ENCODE measurements at regions of chr5 and their contacts with region 1.

Region 1: GRCh38 chr5:170267431-170268152 is 30.0 kb downstream of the LCP2 start:
- DNase-seq: peak; percentile 72 to 87 (median 78)
- H3K4me3 ChIP-seq: peak overlapping the region; percentile 35
- H3K4me3 Mint-ChIP-seq: peak overlapping the region; percentile 64 to 83 (median 70)
- H3K27ac ChIP-seq: peak overlapping the region; percentile 2
- H3K27ac Mint-ChIP-seq: peak overlapping the region; percentile 93 to 99 (median 96)
- H3K4me1 ChIP-seq: peaks cover 90% of the 10 kb centered on the region
- H3K4me1 Mint-ChIP-seq: peaks cover 86 to 97% (median 93%) of the 10 kb centered on the region in 3 donors
- H3K27me3 ChIP-seq: no peaks in the 10 kb centered on the region
- H3K27me3 Mint-ChIP-seq: peaks cover 0 to 2% of the 10 kb centered on the region in 2 donors

Region 2: GRCh38 chr5:170278611-170279452 is 11.2 kb after region 1 on chr5:
- CTCF ChIA-PET with region 1: interaction called, 49 read pairs
- POLR2A ChIA-PET with region 1: interaction called, 21 read pairs
- DNase-seq: peak; percentile 74 to 96 (median 93)
- H3K4me3 ChIP-seq: peak overlapping the region; percentile 55
- H3K4me3 Mint-ChIP-seq: peak overlapping the region; percentile 63 to 89 (median 85)
- H3K27ac ChIP-seq: peak overlapping the region; percentile 65
- H3K27ac Mint-ChIP-seq: peak overlapping the region; percentile 93 to 99 (median 97)
- H3K4me1 ChIP-seq: peaks cover 96% of the 10 kb centered on the region
- H3K4me1 Mint-ChIP-seq: peaks cover 94 to 99% (median 99%) of the 10 kb centered on the region in 3 donors
- H3K27me3 ChIP-seq: no peaks in the 10 kb centered on the region
- H3K27me3 Mint-ChIP-seq: peaks cover 0 to 1% of the 10 kb centered on the region in 2 donors

Region 3: DNA sequence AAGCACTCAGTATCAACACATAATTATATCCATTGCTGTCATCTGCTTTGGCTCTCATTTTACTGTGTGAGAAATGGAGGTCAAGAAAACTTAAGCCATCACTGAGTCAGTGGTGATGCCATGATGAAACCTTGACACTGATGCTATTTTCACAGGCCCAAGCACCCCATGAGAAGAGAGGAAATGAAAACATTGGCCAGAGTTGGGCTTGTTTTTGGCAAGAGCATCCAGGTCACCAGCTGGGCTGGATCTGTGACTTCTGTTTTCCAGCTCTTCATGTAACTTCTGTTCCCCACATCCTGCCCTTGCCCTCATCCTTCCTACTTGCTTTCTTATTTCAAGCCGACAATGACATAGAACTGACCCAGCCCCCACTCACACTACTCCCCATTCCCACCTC is 19.9 kb after region 1 on chr5:
- CTCF ChIA-PET with region 1: interaction called, 292 read pairs
- POLR2A ChIA-PET with region 1: interaction called, 290 read pairs
- DNase-seq: no peak
- H3K4me3 ChIP-seq: peak overlapping the region; percentile 17
- H3K4me3 Mint-ChIP-seq: peak overlapping the region; percentile 69 to 98 (median 75)
- H3K27ac ChIP-seq: no peak overlapping the region
- H3K27ac Mint-ChIP-seq: peak overlapping the region; percentile 89 to 99 (median 96)
- H3K4me1 ChIP-seq: peaks cover 98% of the 10 kb centered on the region
- H3K4me1 Mint-ChIP-seq: peaks cover 100% of the 10 kb centered on the region in 3 donors
- H3K27me3 ChIP-seq: no peaks in the 10 kb centered on the region
- H3K27me3 Mint-ChIP-seq: no peaks in the 10 kb centered on the region

Region 4: DNA sequence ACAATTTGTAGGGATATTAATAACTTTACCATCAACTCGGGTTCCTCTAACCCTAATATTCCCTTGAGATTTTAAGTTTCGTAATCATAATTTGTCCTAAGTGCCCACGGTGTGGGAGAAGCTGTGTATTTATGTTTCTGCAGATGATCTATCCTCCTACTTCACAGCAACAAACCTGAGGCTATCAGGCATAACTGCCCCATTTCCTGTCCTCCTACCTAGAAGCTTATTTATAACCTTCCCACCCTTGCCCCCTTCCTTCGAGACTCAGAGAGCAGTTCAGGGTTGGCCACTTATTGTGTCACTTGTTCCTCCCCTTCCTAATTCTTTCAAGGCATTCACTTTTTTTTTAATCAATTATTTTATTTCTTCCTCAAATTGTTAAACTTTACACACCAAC is 59.6 kb after region 1 on chr5:
- CTCF ChIA-PET with region 1: interaction called, 86 read pairs
- POLR2A ChIA-PET with region 1: interaction called, 22 read pairs
- DNase-seq: no peak
- H3K4me3 ChIP-seq: no peak overlapping the region
- H3K4me3 Mint-ChIP-seq: no peak overlapping the region
- H3K27ac ChIP-seq: no peak overlapping the region
- H3K27ac Mint-ChIP-seq: no peak overlapping the region
- H3K4me1 ChIP-seq: peaks cover 54% of the 10 kb centered on the region
- H3K4me1 Mint-ChIP-seq: peaks cover 4 to 17% (median 9%) of the 10 kb centered on the region in 3 donors
- H3K27me3 ChIP-seq: no peaks in the 10 kb centered on the region
- H3K27me3 Mint-ChIP-seq: peaks cover 0 to 1% of the 10 kb centered on the region in 2 donors

Measured in CD8-positive, alpha-beta memory T cell (primary cell).